ENCODE measurements at regions of chr2 and their contacts with region 1.

Region 1: DNA sequence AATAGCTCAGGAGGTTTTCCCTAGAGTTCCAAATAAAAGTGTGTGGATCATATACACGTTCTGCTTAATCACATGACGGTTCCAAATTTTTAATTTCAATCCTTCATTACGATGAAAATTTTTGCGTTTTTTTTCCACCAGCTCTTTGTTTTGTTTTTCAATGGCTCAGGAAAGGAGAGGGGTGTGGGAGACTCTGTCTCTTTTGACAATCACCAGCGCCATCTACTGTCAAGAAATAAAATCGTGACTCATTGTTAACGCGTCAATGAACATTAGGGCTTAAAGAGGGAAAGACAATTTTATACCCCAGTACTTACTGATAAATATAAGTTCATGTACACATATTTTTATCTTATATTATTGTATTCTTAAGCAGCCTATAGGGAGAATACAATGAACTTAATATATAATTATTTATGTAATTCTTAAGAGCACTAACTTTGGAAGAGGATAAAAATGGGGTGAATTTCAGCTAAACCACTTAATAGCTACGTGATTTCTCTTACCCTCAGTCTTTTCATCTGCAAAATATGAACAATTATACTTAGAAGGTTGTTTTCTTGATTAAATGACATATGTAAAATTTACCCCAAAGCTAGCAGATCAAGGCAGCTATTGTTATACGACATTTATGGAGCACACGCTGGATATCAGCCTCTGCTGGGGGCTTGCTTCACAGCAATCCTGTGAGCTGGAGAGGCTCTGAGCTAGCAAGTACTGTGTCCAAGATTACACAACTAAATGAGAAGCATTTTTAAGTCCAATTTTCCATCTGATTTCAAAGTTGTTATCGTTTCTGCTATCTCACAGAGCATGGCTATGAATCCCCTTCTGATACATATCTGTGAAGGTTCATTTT is 47.4 kb upstream of the RMDN2 start:
- DNase-seq: no peak
- H3K4me3 ChIP-seq: no peak overlapping the region
- H3K27ac ChIP-seq: no peak overlapping the region
- H3K4me1 ChIP-seq: peaks cover 0 to 13% (median 6%) of the 10 kb centered on the region in 6 donors
- H3K27me3 ChIP-seq: peaks cover 0 to 7% (median 0%) of the 10 kb centered on the region in 7 donors
- CTCF ChIP-seq: peak; percentile 41 to 82 (median 69)
- POLR2A ChIP-seq: no peak

Region 2: DNA sequence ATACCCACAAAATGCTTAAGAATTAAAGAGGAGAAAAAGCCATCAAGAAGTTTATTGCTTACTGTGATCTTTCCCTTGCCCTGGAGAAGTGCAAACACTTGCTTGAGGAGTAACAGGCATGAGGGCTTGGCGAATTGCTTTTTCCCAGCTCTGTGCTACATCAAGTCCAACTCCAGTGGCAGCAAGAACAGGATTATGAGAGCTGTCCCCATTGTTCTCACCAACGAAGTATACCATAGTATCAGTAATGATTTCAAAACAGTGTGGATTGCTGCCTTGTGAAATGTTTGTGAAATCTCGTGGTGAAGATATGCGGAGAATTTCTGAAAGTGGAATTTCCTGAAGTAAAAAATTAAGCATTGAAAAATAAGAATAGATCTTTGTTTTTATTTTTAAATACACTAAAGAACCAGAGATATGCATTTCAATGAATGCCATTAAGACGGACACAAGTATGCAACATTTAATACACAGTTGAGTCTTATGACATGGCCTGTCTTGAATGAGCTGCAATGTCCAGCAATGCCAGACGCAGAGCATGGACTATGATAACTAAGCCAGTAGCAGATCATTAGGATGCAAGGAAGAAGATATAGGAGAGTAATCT is 603.2 kb before region 1 on chr2:
- intact Hi-C with region 1: no loop called
- DNase-seq: no peak
- H3K4me3 ChIP-seq: no peak overlapping the region
- H3K27ac ChIP-seq: peak overlapping the region in 2 of 8 donors; percentile 12 to 40
- H3K4me1 ChIP-seq: no peaks in the 10 kb centered on the region
- H3K27me3 ChIP-seq: no peaks in the 10 kb centered on the region
- CTCF ChIP-seq: no peak
- POLR2A ChIP-seq: no peak

Region 3: DNA sequence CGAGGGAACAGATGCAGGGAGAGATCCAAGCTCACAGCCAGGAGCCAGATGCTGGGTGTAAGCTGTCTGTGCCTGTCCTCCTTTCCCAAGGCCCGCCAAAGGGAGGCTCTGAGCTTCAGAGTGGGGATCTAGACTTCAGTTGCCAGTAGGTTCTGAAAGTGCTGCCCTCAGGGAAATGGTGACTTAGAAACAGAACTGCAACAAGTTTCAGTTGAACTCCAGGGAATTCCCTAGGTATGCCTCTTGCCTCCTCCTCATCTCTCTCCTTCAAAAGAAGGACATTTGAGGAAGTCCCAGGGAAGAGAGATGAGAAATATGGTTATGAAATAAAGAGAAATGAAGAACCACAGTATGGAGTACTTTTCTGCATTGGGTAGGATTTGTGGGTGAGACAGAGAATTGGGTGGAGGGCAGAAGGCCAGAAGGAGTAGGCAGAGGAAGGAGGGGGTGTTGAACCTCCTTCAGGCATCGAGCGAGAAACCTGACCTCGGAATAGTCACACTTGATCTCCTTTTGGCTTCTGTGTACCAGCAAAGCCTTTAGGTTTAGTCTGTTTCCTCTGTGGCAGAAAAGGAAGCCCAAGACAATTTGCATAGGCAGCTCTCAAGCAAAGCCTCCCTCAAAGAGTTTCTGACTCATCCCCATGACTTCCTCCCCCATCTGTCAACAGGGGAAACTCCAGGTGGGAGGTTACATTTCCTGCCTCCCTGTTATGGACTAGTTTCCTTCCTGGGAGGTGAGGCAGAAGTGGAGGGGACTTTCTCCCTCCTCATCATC is 487.5 kb before region 1 on chr2:
- intact Hi-C with region 1: loop called (anchors 5 kb)
- DNase-seq: no peak
- H3K4me3 ChIP-seq: no peak overlapping the region
- H3K27ac ChIP-seq: peak overlapping the region; percentile 28 to 74 (median 68)
- H3K4me1 ChIP-seq: peaks cover 12 to 29% (median 20%) of the 10 kb centered on the region in 6 donors
- H3K27me3 ChIP-seq: no peaks in the 10 kb centered on the region
- CTCF ChIP-seq: no peak
- POLR2A ChIP-seq: no peak

Region 4: DNA sequence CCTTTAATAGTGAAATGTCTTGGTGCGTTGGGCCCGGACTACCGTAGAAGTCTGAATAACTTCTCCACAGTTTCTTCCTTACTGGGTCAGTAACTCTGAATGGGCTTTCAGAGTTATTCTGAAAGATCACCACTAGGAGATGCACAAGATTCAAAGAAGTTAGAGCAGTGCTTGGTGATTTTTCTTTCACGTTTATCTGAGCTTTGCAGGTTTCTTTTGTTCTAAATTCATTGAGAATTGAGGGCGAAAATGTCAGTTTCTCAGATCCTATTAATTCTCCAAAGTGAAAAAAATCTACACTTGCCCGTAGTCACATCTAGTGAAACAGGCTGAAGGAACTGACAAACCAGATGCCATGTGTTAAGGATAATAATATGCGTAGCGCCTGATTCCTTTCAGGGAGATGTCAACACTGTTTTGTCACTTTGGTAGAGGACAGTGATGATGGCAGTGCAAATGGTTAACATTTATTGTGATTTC is 463.2 kb before region 1 on chr2:
- intact Hi-C with region 1: loop called (anchors 5 kb)
- DNase-seq: no peak
- H3K4me3 ChIP-seq: no peak overlapping the region
- H3K27ac ChIP-seq: no peak overlapping the region
- H3K4me1 ChIP-seq: peaks cover 0 to 13% (median 8%) of the 10 kb centered on the region in 6 donors
- H3K27me3 ChIP-seq: no peaks in the 10 kb centered on the region
- CTCF ChIP-seq: peak; percentile 40 to 87 (median 75)
- POLR2A ChIP-seq: no peak

Region 5: GRCh38 chr2:38146275-38146906 is 268.7 kb after region 1 on chr2:
- intact Hi-C with region 1: no loop called
- DNase-seq: no peak
- H3K4me3 ChIP-seq: peak overlapping the region in 1 of 8 donors; percentile 13
- H3K27ac ChIP-seq: peak overlapping the region; percentile 57 to 91 (median 77)
- H3K4me1 ChIP-seq: peaks cover 3 to 51% (median 9%) of the 10 kb centered on the region in 6 donors
- H3K27me3 ChIP-seq: no peaks in the 10 kb centered on the region
- CTCF ChIP-seq: no peak
- POLR2A ChIP-seq: no peak